Mammary epithelial cell (primary cell): ENCODE measurements at regions of chr6 and their contacts with region 1.

Region 1: GRCh38 chr6:47733879-47734558 is 35.6 kb downstream of the ADGRF4 start:
- DNase-seq: peak; percentile 47
- H3K4me3 ChIP-seq: no peak overlapping the region
- H3K27ac ChIP-seq: no peak overlapping the region
- H3K4me1 ChIP-seq: peaks cover 29% of the 10 kb centered on the region
- H3K27me3 ChIP-seq: no peaks in the 10 kb centered on the region
- CTCF ChIP-seq: peak; percentile 49 to 64

Region 2: DNA sequence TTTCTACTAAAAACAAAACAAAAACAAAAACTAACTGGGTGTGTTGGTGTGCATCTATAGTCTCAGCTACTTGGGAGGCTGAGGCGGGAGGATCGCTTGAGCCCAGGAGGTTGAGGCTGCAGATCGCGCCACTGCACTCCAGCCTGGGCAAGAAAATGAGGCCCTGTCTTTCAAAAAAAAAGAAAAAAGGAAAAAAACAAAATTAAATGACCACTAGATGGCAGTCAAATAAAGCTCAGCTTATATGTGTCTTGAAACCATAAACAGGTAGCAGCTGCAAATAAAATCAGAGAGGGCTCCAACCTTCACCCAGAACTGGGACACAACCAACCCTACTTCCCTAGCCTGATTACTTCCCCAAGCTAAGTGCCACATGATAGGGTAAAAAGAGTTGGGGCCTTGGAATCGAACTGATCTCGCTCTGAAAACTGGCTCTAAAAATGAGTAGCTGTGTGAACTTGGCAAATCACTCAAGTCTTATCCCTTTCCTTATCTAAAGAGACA is 102.7 kb before region 1 on chr6:
- CTCF ChIA-PET with region 1: no interaction called
- dilution Hi-C with region 1: no loop called
- in situ Hi-C with region 1: loop called (anchors 5 to 25 kb)
- intact Hi-C with region 1: loop called (anchors 1 kb)
- DNase-seq: peak; percentile 60
- H3K4me3 ChIP-seq: no peak overlapping the region
- H3K27ac ChIP-seq: no peak overlapping the region
- H3K4me1 ChIP-seq: peaks cover 5% of the 10 kb centered on the region
- H3K27me3 ChIP-seq: no peaks in the 10 kb centered on the region
- CTCF ChIP-seq: peak; percentile 49 to 59

Region 3: DNA sequence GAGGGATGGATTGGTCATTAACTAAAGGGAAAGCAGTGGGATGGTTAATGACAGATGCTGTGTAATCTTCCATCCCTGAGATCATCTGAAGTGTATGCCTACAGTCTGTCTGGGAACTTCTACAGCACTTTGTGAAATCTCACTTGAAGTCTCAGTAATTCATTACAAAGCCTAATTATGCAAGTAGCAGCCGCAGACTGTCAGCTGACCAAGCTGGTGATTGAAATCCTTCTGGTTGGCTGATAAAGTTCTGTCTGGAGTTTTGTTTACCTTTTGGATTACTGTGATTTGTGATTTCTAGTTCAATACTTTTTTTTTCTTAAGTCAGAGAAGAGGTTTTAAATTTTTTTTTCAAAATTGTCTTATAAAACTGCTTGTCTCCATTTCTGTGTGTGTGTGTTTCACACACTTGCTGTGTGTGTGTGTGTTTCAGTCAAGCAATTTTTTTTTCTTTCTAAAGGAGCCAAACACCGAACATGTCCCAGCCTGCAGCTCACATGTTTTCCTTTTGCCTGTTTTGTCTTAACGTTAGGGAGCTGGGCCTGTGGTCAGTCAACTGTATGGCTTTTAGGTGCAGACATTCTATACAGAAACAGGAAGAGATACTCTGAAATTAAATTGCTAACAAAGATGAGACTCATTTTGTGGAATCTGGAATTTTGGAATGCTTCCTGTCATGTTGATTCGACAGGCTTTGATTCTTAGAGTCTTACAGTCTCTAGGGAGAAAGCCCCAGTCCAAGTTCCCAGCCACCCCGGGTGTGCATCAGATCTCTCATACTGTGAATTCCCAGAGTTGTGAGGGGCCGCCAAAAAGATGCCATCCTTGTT is 64.1 kb before region 1 on chr6:
- CTCF ChIA-PET with region 1: no interaction called
- dilution Hi-C with region 1: loop called (anchors 5 kb)
- in situ Hi-C with region 1: no loop called
- intact Hi-C with region 1: no loop called
- DNase-seq: peak; percentile 94
- H3K4me3 ChIP-seq: no peak overlapping the region
- H3K27ac ChIP-seq: peak overlapping the region; percentile 83
- H3K4me1 ChIP-seq: peaks cover 33% of the 10 kb centered on the region
- H3K27me3 ChIP-seq: no peaks in the 10 kb centered on the region
- CTCF ChIP-seq: no peak

Region 4: GRCh38 chr6:47701352-47701751 is 32.7 kb before region 1 on chr6:
- CTCF ChIA-PET with region 1: interaction called, 3 read pairs
- dilution Hi-C with region 1: no loop called
- in situ Hi-C with region 1: no loop called
- intact Hi-C with region 1: loop called (anchors 1 kb)
- DNase-seq: peak; percentile 88
- H3K4me3 ChIP-seq: no peak overlapping the region
- H3K27ac ChIP-seq: peak overlapping the region; percentile 93
- H3K4me1 ChIP-seq: peaks cover 49% of the 10 kb centered on the region
- H3K27me3 ChIP-seq: no peaks in the 10 kb centered on the region
- CTCF ChIP-seq: no peak